OCI-LY7 (cell line): ENCODE measurements at regions of chr1 and their contacts with region 1.

Region 1: DNA sequence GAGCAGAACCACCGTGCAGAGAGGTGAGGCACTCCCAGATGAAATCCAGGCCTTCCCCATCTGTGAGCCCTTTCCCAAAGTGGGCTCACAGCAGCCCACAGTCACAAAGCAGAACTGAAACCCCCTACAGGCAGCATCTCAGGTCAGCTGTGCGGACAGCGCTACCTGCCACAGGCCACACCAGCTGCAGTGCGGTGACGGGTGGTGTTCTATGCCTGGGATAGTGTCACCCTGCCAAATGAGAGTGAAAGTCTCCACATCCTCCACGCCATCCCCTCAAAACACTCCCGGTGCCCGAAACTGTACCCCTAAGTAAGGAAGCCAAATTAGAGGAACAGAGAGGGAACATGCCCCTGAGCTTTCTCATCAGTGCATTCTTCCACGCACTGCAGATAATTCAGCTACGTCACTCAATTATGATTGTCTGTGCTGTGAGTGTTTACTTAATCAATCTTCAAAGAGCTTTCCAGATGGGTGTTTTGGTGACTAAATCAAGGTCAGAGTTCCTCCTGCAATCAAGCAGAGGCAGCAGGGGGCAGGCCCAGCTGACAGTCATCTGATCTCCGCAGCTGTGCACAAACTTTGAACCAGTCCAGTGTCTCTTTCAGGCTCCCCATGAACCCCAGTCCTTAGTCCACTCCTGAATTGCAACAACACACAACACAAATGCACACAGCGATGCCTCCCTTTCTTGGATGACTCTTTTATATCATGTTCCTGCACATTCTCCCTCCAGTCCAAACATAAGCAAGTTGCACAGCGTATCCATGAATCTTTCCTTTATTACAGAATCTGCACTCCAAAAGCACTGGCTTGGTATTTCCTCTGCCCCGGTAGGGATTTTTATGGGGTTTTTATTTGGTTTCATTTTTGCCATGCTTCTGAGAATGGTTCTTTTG is 150.0 kb downstream of the TOMM20 start:
- DNase-seq: peak; percentile 94
- H3K4me3 ChIP-seq: peak overlapping the region; percentile 56
- H3K27ac ChIP-seq: peak overlapping the region; percentile 92
- H3K4me1 ChIP-seq: peaks cover 68% of the 10 kb centered on the region
- CTCF ChIP-seq: peak; percentile 63

Region 2: GRCh38 chr1:234763367-234763766 is 215.3 kb before region 1 on chr1:
- CTCF ChIA-PET with region 1: no interaction called
- POLR2A ChIA-PET with region 1: no interaction called
- intact Hi-C with region 1: loop called (anchors 2 kb)
- DNase-seq: no peak
- H3K4me3 ChIP-seq: no peak overlapping the region
- H3K27ac ChIP-seq: no peak overlapping the region
- H3K4me1 ChIP-seq: peaks cover 23% of the 10 kb centered on the region
- CTCF ChIP-seq: no peak

Region 3: DNA sequence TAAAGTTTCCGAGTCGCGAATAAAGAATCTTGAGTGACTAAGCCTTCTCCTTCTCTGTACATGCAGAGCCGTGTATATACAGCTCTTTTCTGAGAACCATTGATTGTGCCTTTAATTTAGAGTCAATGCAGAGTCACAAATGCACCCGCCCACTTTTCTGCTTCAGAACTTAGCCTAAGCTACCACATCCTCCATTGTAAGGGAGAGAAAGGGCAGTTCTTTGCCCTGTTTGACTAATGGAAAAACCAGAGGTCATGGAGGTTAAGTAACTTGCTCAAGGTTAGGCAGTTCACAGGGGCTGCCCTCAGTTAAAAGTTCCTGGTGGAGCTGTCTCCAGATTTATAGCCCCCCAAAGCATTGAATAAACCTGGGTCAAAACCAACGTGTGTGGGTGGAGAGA is 10.4 kb after region 1 on chr1:
- CTCF ChIA-PET with region 1: interaction called, 4 read pairs
- POLR2A ChIA-PET with region 1: interaction called, 14 read pairs
- intact Hi-C with region 1: no loop called
- DNase-seq: no peak
- H3K4me3 ChIP-seq: no peak overlapping the region
- H3K27ac ChIP-seq: no peak overlapping the region
- H3K4me1 ChIP-seq: peaks cover 45% of the 10 kb centered on the region
- CTCF ChIP-seq: no peak

Region 4: GRCh38 chr1:235006132-235006943 is 27.7 kb after region 1 on chr1:
- CTCF ChIA-PET with region 1: no interaction called
- POLR2A ChIA-PET with region 1: interaction called, 14 read pairs
- intact Hi-C with region 1: loop called (anchors 1 kb)
- DNase-seq: no peak
- H3K4me3 ChIP-seq: no peak overlapping the region
- H3K27ac ChIP-seq: peak overlapping the region; percentile 87
- H3K4me1 ChIP-seq: peaks cover 95% of the 10 kb centered on the region
- CTCF ChIP-seq: no peak

Region 5: DNA sequence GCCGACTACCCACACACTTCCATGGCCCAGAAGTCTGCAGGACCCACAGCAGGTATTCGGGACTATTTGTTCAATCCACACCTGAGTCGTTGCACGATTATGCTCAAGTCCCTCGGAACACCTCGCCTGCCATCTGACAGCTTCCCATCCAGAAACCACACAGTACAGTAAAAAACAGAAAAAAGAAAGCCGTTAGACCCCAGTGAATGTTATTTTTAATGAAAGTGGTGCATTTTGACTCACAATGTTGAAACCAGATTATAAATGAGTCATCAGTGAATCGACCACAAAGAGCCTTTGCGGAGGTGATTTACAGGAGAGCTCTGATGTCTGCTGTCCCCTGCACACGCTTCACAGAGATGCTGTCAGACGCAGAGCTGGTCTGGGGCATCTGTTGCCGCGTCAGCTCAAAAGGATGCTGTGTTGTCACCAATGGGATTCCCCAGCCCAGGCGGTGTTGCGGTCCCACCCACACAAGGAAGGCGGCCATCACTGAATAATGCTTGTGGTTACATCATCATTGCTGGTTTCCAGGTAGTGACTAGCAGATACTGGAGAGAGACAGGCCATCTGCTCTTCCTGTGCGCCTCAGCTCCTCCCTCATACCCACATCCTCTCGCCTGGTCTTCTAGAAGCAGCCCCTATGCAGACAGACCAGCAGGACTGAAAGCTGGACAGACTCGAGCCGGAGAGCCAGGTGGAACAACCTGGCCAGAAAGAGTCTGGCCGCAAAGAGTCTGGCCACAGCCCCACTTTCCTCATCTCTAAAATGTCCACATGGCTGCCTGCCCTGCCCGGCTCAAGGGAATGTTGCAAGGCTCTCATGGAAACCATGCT is 33.2 kb after region 1 on chr1:
- CTCF ChIA-PET with region 1: no interaction called
- POLR2A ChIA-PET with region 1: interaction called, 14 read pairs
- intact Hi-C with region 1: loop called (anchors 1 kb)
- DNase-seq: peak; percentile 95
- H3K4me3 ChIP-seq: peak overlapping the region; percentile 64
- H3K27ac ChIP-seq: peak overlapping the region; percentile 87
- H3K4me1 ChIP-seq: peaks cover 91% of the 10 kb centered on the region
- CTCF ChIP-seq: no peak

Region 6: GRCh38 chr1:235060607-235061470 is 82.2 kb after region 1 on chr1:
- CTCF ChIA-PET with region 1: no interaction called
- POLR2A ChIA-PET with region 1: no interaction called
- intact Hi-C with region 1: loop called (anchors 5 kb)
- DNase-seq: no peak
- H3K4me3 ChIP-seq: no peak overlapping the region
- H3K27ac ChIP-seq: no peak overlapping the region
- H3K4me1 ChIP-seq: peaks cover 40% of the 10 kb centered on the region
- CTCF ChIP-seq: no peak

Region 7: DNA sequence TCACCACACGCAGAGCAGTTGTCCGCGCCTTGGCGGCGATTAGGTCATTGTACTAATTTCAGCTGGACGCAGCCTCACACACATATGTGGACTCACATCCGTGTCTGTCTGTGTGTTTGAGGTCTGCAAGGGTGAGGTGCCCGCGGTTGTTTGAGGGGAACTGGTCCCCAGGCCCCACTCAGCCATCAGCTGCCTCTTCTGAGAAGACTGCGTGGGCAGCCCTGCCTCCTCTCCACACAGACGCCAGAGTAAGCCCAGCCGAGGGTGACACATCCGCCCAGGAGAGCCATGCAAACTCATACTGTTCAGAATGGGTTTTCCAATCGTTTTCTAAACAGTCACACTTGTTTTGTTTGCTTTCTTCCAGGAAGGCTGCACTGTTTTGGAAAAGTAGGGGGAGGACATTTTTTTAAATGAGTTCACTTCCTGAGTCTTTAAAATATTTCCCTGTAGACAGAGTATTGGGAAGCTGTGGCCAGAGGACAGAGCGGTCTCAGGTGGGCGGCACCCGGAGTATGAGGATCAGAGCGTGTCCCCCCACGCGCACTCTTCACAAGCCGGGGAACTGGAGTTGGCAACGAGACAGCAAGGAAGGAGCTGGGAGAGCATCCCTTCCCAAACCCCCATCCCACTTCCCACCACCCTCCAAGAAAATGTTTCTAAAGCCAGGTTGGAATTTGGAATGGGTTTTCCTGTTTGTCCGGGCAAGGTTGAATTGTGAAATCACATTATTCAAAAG is 96.7 kb after region 1 on chr1:
- CTCF ChIA-PET with region 1: interaction called, 4 read pairs
- POLR2A ChIA-PET with region 1: no interaction called
- intact Hi-C with region 1: loop called (anchors 1 kb)
- DNase-seq: peak; percentile 57
- H3K4me3 ChIP-seq: peak overlapping the region; percentile 23
- H3K27ac ChIP-seq: peak overlapping the region; percentile 62
- H3K4me1 ChIP-seq: peaks cover 70% of the 10 kb centered on the region
- CTCF ChIP-seq: no peak